ENCODE measurements at regions of chr6 and their contacts with region 1.

Region 1: GRCh38 chr6:9467801-9468209 is 947.1 kb downstream of the TFAP2A start:
- DNase-seq: no peak

Region 2: GRCh38 chr6:9482030-9482738 is 14.4 kb after region 1 on chr6:
- intact Hi-C with region 1: no loop called
- DNase-seq: no peak

Region 3: GRCh38 chr6:10882657-10883171 is 1414.9 kb after region 1 on chr6:
- intact Hi-C with region 1: loop called in 1 of 2 experiments (anchors 5 kb)
- DNase-seq: no peak

Measured in posterior vena cava (tissue), 2 donors.